ENCODE measurements at regions of chrX and their contacts with region 1.

Region 1: GRCh38 chrX:23782863-23783568 is at the start of gene SAT1:
- H3K4me3 Mint-ChIP-seq: peak within 1 kb of the TSS; percentile 86
- H3K27ac Mint-ChIP-seq: peak within 1 kb of the TSS; percentile 94
- H3K4me1 Mint-ChIP-seq: peaks cover 12% of the 10 kb centered on the region
- H3K27me3 Mint-ChIP-seq: no peaks in the 10 kb centered on the region

Region 2: DNA sequence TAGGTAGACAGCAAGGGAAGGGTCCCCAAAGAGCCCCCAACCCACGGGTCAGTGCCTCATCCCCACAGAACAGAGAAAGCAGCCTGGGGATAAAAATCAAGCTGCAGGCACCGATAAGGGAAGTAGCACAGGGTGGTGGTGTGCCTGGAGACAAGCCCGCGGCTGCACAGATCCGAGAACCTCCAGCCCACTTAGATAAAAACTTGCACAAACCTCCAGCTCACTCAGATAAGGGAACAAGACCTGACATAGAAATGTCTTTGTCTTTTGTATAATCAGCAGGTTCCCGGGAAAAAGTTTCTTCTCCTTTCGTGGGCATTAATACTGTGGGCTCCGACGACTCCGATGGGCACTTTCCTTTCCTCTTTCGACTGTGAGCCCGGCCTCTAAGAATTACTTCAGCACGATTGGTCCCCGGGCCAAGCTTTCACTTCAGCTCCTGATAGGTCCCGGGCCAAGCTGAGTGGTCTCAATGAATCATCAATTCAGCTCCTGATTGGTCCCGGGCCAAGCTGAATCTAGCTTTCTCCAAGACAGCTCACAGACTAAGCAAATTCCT is 83.3 kb before region 1 on chrX:
- intact Hi-C with region 1: no loop called
- H3K4me3 Mint-ChIP-seq: peak overlapping the region; percentile 46
- H3K27ac Mint-ChIP-seq: peak overlapping the region; percentile 58
- H3K4me1 Mint-ChIP-seq: peaks cover 10% of the 10 kb centered on the region
- H3K27me3 Mint-ChIP-seq: no peaks in the 10 kb centered on the region

Region 3: DNA sequence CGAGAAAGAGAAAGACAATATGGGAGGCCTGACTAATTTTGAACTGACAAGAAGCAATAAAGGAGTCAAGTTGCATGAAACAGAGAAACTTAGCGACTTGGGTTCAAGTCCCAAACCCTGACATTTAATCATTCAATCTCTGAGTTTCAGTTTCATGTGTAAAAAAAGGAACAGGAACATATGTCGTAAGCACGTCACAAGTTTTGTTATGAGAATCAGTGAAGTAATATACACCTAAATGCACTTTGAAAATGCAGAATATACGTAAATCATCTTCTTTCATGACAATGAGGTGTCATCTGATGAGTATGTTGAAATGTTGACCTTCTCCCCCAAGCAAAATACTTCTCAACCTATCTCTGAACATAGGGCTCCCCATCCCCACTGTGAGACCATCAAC is 50.3 kb before region 1 on chrX:
- intact Hi-C with region 1: loop called (anchors 5 kb)
- H3K4me3 Mint-ChIP-seq: no peak overlapping the region
- H3K27ac Mint-ChIP-seq: peak overlapping the region; percentile 70
- H3K4me1 Mint-ChIP-seq: peaks cover 25% of the 10 kb centered on the region
- H3K27me3 Mint-ChIP-seq: no peaks in the 10 kb centered on the region

Region 4: GRCh38 chrX:23742697-23743622 is 40.1 kb before region 1 on chrX and contains the start of gene ACOT9:
- intact Hi-C with region 1: loop called (anchors 1 kb)
- H3K4me3 Mint-ChIP-seq: peak within 1 kb of the TSS; percentile 85
- H3K27ac Mint-ChIP-seq: peak within 1 kb of the TSS; percentile 92
- H3K4me1 Mint-ChIP-seq: peaks cover 24% of the 10 kb centered on the region
- H3K27me3 Mint-ChIP-seq: no peaks in the 10 kb centered on the region

Region 5: DNA sequence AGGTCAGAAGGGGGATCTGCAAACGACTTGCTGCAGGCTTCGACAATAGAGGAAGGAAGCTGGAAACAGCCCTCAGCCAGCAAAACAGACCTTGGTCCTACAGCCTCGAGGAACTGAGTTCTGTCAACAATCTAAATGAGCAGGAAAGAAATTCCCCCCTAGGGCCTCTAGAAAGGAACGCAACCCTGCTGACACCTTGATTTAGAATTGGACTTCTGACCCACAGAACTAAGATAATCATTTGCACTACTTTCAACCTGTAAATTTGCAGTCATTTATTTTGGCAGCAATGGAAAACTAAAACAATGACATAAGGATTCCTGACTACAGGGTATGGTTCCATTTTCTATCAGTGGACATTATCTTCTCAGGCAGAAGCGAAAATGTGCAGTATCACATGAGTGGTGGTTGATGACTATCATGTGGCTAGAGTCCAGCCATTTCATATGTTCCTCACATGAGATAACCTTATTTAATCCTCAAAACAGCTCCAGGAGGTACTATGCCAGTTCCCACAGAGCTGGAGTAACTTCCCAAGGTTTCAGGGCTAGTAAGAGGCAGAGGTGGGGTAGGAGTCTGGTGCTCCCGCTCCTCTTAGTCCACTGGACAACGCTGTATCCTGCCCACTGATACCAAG is 61.6 kb after region 1 on chrX:
- intact Hi-C with region 1: loop called (anchors 1 kb)
- H3K4me3 Mint-ChIP-seq: peak overlapping the region; percentile 24
- H3K27ac Mint-ChIP-seq: peak overlapping the region; percentile 96
- H3K4me1 Mint-ChIP-seq: peaks cover 45% of the 10 kb centered on the region
- H3K27me3 Mint-ChIP-seq: no peaks in the 10 kb centered on the region

Region 6: DNA sequence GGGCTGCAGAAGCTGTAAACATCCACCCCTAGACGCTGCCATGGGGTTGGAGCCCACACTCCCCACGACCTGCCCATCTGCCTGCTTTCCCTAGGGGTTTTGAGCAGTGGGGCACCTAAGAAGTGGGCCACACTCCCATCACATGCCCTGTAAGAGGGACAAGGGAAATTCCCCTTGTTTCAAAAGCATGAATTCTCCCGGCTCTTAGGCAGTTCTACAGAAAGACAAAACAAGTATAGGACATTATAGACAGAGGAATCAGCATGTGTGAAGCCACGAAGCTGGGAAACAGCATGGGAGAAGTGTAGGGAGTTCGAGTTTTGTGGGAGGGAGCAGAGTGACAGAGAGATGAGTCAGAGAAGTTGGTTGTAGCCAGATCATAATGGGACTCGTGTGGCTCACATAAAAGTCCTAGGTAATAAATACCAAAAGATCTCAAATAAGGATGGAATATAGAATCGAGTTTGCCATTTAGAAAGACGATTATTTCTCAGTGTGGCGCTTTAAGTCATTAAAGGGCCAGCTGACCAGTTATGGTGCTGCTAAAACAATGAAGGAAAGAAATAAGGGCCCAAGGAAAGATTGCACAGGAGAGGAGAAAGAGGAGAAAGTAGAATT is 100.8 kb after region 1 on chrX:
- intact Hi-C with region 1: loop called (anchors 5 kb)
- H3K4me3 Mint-ChIP-seq: peak overlapping the region; percentile 18
- H3K27ac Mint-ChIP-seq: peak overlapping the region; percentile 97
- H3K4me1 Mint-ChIP-seq: peaks cover 37% of the 10 kb centered on the region
- H3K27me3 Mint-ChIP-seq: no peaks in the 10 kb centered on the region

Region 7: DNA sequence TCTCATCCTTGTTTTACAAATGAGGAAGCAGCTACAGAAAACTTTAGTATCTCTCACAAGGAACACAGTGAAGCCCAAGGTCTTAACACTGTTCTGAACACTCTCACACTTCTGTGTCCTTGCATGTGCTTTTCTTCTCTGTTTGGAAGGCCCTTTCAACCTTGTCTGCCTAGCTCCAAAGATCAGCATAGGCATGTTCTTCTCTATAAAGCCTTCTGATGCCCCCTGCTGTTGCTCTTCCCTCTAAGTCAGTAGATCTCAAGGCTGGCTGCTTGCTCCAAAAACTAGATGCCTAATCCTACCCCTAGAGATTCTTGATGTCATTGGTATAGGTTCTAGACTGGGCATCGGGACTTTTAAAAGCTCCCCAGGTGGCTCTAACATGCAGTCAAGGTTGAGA is 118.8 kb after region 1 on chrX:
- intact Hi-C with region 1: loop called (anchors 1 kb)
- H3K4me3 Mint-ChIP-seq: no peak overlapping the region
- H3K27ac Mint-ChIP-seq: no peak overlapping the region
- H3K4me1 Mint-ChIP-seq: peaks cover 10% of the 10 kb centered on the region
- H3K27me3 Mint-ChIP-seq: no peaks in the 10 kb centered on the region

Region 8: DNA sequence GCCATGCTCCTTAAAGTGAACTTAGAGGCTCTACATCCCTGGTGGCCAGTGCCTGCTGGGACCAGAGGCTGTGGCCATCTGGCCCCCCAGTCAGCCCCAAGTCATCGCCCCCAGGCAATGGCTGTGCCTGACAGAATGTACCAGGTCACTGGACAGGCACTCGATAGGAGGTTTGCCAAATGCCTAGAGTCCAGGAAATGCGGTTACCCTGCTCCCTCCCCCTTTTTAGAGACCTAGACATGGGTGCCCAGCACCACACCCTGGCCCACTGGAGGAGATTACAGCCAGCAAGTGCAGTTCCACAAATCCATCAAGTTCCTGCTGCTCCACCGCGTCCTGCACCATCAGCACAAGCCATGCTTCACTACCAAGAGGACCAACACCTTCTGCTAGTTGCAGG is 350.3 kb after region 1 on chrX:
- intact Hi-C with region 1: no loop called
- H3K4me3 Mint-ChIP-seq: no peak overlapping the region
- H3K27ac Mint-ChIP-seq: no peak overlapping the region
- H3K4me1 Mint-ChIP-seq: no peaks in the 10 kb centered on the region
- H3K27me3 Mint-ChIP-seq: no peaks in the 10 kb centered on the region

Region 9: DNA sequence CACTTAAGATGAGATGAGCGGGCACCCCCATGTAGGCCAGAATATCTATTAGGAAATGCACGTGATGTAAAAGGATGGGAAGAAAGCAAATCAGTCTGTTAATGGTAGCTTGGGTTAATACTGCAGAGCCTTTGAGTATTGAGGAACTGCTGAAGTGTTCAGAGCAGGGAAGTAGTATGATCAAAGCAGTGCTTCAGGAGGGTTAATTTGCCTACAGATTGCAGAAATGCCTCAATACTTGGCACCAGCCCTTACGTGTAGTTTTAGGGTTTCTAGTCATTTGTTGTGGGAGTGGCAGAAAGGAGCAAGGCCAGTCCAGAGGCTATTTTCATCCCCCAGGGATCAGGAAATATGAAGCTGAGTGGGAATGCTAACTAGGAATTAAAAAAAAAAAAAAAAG is 386.2 kb after region 1 on chrX:
- intact Hi-C with region 1: no loop called
- H3K4me3 Mint-ChIP-seq: no peak overlapping the region
- H3K27ac Mint-ChIP-seq: peak overlapping the region; percentile 57
- H3K4me1 Mint-ChIP-seq: peaks cover 38% of the 10 kb centered on the region
- H3K27me3 Mint-ChIP-seq: no peaks in the 10 kb centered on the region

Measured in dendritic cell treated with granulocyte-macrophage colony-stimulating factor and Interleukin-4, amounts not matched to agents 40 ng/mL and 50 ng/mL, for 4 days (primary cell).